Activated CD8-positive, alpha-beta T cell treated with anti-CD3 and anti-CD28 coated beads for 36 hours (primary cell): ENCODE measurements at regions of chr1 and their contacts with region 1.

Region 1: DNA sequence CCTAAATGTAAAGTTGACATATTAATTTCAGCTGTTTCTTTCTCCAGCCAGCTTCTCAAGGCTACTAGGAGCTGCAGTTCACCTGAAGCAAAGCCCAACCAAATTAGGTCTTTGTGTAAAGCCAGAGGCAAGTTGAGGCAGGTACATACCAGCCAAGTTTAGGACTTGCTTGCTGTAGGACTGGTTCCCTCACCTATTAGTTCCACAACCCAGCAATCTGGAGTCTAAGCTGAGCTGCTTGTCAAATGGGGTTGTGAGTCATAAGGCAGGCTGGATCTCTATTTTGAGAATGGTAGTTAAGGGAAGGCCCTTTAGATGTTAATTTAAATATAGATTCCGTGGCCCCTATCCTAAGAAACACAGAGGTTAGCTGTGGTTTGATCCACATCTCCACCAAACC is 7.6 kb upstream of the FLG2 start:
- DNase-seq: no peak
- ATAC-seq: no peak
- H3K4me3 Mint-ChIP-seq: no peak overlapping the region
- H3K27ac Mint-ChIP-seq: no peak overlapping the region
- H3K4me1 Mint-ChIP-seq: no peaks in the 10 kb centered on the region
- H3K27me3 Mint-ChIP-seq: peaks cover 22% of the 10 kb centered on the region
- CTCF ChIP-seq: no peak

Region 2: GRCh38 chr1:152347116-152347728 is 20.2 kb before region 1 on chr1:
- CTCF ChIA-PET with region 1: interaction called, 10 read pairs
- POLR2A ChIA-PET with region 1: no interaction called
- intact Hi-C with region 1: no loop called
- DNase-seq: peak; percentile 63
- ATAC-seq: peak; percentile 79
- H3K4me3 Mint-ChIP-seq: no peak overlapping the region
- H3K27ac Mint-ChIP-seq: no peak overlapping the region
- H3K4me1 Mint-ChIP-seq: peaks cover 7% of the 10 kb centered on the region
- H3K27me3 Mint-ChIP-seq: peaks cover 22% of the 10 kb centered on the region
- CTCF ChIP-seq: peak; percentile 94